Activated naive CD4-positive, alpha-beta T cell treated with anti-CD3 and anti-CD28 coated beads for 36 hours (primary cell): ENCODE measurements at regions of chr3 and their contacts with region 1.

Region 1: DNA sequence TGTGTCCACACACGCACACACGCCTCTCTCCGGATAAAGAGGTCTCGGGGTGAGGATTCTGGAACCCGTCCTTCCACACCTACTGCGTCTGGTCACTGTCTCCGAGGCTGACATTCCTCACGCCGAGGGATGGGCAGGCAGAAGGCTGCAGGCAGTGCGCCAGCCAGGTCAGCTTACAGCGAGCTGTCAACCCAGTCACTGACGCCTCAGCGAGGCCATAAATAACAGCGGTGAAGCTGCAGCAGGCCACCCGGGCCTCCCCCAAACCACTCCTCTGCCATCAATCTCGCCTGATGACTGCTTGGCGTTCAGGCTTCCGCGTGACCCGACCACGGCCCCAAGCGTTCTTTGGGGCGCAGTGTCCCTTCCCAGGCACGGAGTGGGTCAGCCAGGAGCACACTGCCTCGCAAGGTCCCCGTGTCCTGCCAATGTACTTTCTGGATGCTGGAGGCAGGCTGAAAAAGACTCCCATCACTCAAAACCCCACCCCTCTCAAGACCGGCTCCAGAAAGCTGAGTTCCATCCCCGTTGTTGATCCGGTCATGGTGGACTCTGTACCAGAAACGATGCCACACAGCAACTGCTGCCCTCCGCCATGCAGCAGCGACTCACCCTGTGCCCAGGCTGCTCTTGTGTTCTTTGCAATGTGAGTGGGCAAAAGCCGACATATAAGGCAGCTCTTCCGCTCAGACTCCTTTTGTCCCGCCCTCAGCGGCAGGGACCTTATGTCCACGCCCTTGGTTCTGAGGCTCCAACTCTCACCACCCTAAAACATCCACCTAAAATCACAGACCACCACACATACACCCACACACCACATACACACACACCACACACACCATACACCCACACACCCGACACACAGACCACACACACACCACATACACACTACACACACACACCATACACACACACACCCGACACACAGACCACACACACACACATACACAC is 27.1 kb downstream of the CPN2 start:
- DNase-seq: peak; percentile 32
- H3K4me3 Mint-ChIP-seq: no peak overlapping the region
- H3K27ac Mint-ChIP-seq: no peak overlapping the region
- H3K4me1 Mint-ChIP-seq: peaks cover 3% of the 10 kb centered on the region
- H3K27me3 Mint-ChIP-seq: peaks cover 3% of the 10 kb centered on the region

Region 2: DNA sequence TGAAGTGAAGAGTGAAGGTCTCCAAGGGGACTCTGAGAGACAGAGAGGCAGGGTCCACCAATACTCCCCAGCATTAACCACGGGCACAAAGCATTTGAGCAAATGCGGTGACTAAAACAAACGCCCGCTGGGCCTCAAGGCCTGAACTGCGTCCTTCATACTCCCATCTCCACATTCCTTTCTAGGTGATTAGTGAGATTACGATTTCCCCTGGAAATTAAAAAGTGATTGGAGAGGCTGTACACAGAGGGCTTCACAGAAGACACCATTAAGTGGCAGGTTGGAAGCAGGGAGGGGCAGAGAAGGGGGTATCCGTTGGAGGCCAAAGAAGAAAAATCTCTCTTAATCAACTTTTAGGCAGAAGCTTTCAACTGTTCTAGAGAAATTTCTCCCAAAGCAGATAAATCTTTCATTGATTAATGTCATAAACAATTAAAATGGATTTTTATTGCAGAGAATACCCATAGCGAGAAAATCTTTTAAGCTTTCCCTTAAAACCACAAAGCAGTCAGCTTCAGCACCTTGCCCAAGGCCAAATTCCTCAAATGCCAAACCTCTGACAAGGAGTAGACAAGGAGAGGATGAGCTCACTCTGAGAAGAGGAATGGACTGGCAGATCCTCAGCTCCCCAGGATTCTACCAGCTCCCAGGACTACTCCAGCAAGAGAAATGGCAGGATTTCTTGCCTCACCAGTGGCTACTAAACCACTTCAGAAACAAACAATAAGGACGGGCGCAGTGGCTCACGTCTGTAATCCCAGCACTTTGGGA is 1444.5 kb before region 1 on chr3:
- CTCF ChIA-PET with region 1: no interaction called
- intact Hi-C with region 1: no loop called
- DNase-seq: no peak
- H3K4me3 Mint-ChIP-seq: no peak overlapping the region
- H3K27ac Mint-ChIP-seq: no peak overlapping the region
- H3K4me1 Mint-ChIP-seq: peaks cover 2% of the 10 kb centered on the region
- H3K27me3 Mint-ChIP-seq: no peaks in the 10 kb centered on the region

Region 3: GRCh38 chr3:192943393-192943792 is 1380.7 kb before region 1 on chr3:
- CTCF ChIA-PET with region 1: no interaction called
- intact Hi-C with region 1: no loop called
- DNase-seq: no peak
- H3K4me3 Mint-ChIP-seq: no peak overlapping the region
- H3K27ac Mint-ChIP-seq: peak overlapping the region; percentile 2
- H3K4me1 Mint-ChIP-seq: no peaks in the 10 kb centered on the region
- H3K27me3 Mint-ChIP-seq: peaks cover 7% of the 10 kb centered on the region

Region 4: DNA sequence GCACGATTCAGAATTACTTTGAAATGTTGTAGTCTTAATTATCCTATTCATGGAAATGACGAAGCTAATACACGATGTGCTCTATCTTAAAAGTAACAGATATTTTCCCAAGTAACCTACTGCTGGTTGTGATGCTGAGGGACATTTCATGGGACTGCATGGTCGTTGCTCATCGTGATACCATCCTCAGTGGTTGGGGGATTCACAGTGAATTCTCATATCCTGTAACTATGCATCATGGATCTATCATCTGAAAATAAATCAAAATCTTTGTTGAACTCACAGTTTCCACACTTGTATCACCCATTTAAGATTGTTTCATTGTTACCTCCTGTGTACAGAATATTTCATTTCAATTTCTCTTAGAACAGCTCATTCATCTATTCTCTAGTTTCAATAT is 646.3 kb before region 1 on chr3:
- CTCF ChIA-PET with region 1: no interaction called
- intact Hi-C with region 1: loop called (anchors 5 kb)
- DNase-seq: peak; percentile 53
- H3K4me3 Mint-ChIP-seq: no peak overlapping the region
- H3K27ac Mint-ChIP-seq: peak overlapping the region; percentile 55
- H3K4me1 Mint-ChIP-seq: peaks cover 10% of the 10 kb centered on the region
- H3K27me3 Mint-ChIP-seq: no peaks in the 10 kb centered on the region

Region 5: DNA sequence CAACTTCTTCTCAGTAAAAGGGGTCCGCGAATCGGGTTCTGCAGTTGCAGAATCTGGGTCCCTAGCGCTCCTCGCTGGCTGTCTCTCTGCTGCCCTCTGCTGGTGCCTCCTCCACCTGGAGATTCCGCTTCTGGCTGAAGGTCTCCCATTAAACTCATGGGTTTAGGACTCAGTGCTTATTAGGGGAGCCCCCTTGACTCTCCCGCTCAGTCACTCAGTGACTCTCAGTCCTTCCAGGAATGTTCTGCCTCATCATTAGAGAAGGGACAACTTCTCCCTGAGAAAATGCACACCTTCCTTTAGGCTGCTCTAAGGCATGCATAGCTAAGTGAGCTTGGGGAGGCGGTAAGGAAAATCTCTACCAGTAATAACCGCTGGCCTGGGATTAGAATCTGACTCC is 20.0 kb after region 1 on chr3:
- CTCF ChIA-PET with region 1: interaction called, 14 read pairs
- intact Hi-C with region 1: no loop called
- DNase-seq: peak; percentile 81
- H3K4me3 Mint-ChIP-seq: no peak overlapping the region
- H3K27ac Mint-ChIP-seq: no peak overlapping the region
- H3K4me1 Mint-ChIP-seq: no peaks in the 10 kb centered on the region
- H3K27me3 Mint-ChIP-seq: no peaks in the 10 kb centered on the region